Astrocyte of the cerebellum (primary cell): ENCODE measurements at regions of chr3 and their contacts with region 1.

Region 1: DNA sequence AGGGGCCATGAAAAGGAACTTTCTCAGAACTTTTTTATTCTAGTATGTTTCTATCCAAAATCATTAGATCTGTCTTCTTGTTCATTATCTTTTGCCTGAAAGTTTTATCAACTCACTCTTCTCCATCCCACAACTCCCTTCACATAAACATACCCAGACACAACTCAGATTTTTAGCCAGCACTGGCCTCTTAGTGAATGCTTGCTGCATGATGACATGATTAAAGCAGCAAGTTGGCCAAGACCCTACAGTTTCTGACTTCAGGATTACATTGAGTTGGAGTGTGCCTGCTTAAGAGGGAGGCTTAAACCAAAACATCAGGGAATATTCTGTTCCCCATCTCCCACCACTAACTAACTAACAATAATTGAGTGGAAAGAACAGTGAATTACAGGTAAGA is 38.1 kb downstream of the PLSCR2 start:
- DNase-seq: no peak
- H3K4me3 ChIP-seq: no peak overlapping the region
- CTCF ChIP-seq: no peak

Region 2: DNA sequence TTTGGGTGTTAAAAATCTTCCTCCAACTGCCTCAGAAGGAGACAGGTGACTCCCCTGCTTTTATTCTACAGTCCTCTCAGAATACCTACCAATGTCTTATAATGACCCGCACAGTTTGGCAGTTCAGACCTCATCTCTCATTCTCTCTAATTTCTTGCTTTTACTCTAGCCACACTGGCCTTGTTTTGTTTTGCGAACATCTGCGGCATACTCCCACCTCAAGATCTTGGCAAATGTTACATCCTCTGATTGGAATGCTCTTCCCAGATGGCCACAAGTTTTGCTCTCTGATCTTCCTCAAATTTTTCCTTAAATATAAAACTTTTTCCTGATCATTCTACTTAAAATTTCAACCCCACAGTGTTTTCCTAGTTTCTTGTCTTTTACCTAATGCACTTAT is 56.0 kb before region 1 on chr3:
- in situ Hi-C with region 1: loop called (anchors 5 kb)
- DNase-seq: peak; percentile 63
- H3K4me3 ChIP-seq: no peak overlapping the region
- CTCF ChIP-seq: no peak

Region 3: DNA sequence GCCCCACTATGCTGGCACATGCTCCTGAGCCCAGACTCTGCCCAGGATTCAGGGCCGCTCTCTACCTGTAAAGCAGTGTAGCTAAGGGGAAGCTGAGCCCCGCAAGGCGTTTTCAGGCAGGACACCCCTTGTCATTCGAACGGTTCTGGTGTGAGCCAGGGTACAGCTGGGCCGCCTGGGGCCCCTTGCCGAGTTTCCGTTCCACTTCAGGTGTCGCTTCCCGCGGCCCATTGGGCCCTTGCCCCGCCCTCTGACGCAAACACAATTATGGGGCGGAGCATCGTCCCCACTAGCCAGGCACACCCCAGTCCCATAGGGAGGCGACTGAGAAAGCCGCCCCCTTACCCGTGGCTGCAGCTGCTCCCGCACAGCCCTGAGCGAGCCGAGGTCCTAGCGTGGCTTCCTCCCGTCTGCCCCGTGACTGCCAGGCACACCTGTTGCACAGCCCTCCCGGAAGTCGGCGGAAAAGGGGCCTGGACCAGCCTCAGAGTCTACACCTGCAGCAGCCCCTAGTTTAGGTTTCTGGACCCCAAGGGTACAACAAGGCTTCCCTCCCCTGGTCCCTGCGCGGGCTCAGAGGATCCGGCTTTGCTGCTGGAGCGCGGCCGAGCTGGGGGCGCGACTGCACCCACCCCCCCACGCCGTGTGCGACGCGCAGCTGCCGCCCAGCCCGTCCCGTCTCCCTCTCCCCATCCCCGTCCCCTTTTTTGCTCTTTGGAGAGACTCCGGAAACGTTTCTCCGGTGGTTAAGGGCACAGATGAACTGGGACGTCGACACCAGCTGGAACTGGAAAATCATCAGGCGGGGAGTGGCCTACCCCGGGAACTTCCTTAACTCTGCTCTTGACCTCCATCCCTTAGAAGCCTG is 38.1 kb after region 1 on chr3 and contains the start of gene PLSCR2:
- in situ Hi-C with region 1: no loop called
- DNase-seq: no peak
- H3K4me3 ChIP-seq: peak within 1 kb of the TSS; percentile 38
- CTCF ChIP-seq: no peak